ENCODE measurements at regions of chr5 and their contacts with region 1.

Region 1: GRCh38 chr5:19902316-19902934 is 85.6 kb downstream of the CDH18 start:
- DNase-seq: no peak
- H3K4me3 ChIP-seq: no peak overlapping the region
- H3K27ac ChIP-seq: no peak overlapping the region
- H3K4me1 ChIP-seq: no peaks in the 10 kb centered on the region
- H3K27me3 ChIP-seq: no peaks in the 10 kb centered on the region
- CTCF ChIP-seq: no peak

Region 2: DNA sequence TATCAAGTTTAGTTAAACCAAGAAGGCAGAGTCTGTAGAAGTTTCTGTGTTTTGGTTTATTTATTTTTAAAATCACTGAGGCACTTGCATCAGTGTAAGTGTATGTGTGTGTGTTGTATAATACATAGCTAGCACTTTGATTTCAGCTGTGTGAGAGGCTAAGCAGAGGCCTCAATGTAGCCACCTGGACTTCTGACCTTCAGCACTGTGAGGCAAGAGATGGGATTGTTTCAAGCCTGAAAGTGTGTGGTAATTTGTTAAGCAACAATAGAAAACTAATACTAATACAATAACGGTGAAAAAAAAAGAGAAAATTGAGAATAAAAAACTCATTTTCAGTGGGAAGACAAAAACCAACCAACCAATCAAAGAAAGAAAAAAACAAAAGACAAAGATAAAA is 241.7 kb before region 1 on chr5:
- CTCF ChIA-PET with region 1: interaction called, 23 read pairs
- POLR2A ChIA-PET with region 1: no interaction called
- intact Hi-C with region 1: no loop called
- DNase-seq: no peak
- H3K4me3 ChIP-seq: no peak overlapping the region
- H3K27ac ChIP-seq: no peak overlapping the region
- H3K4me1 ChIP-seq: no peaks in the 10 kb centered on the region
- H3K27me3 ChIP-seq: no peaks in the 10 kb centered on the region
- CTCF ChIP-seq: no peak